Naive thymus-derived CD4-positive, alpha-beta T cell (primary cell): ENCODE measurements at regions of chr7 and their contacts with region 1.

Region 1: GRCh38 chr7:26151953-26152781 is at the start of gene NFE2L3:
- DNase-seq: peak; percentile 71 to 90 (median 79)
- ATAC-seq: peak; percentile 90
- H3K4me3 ChIP-seq: peak within 1 kb of the TSS; percentile 77
- H3K4me3 Mint-ChIP-seq: peak within 1 kb of the TSS; percentile 85 to 100 (median 92)
- H3K27ac ChIP-seq: peak within 1 kb of the TSS; percentile 73
- H3K27ac Mint-ChIP-seq: peak within 1 kb of the TSS; percentile 74 to 97 (median 93)
- H3K4me1 ChIP-seq: peaks cover 26 to 33% of the 10 kb centered on the region in 2 donors
- H3K4me1 Mint-ChIP-seq: peaks cover 23 to 56% (median 51%) of the 10 kb centered on the region in 7 donors
- H3K27me3 ChIP-seq: no peaks in the 10 kb centered on the region
- H3K27me3 Mint-ChIP-seq: no peaks in the 10 kb centered on the region
- total RNA-seq, gene NFE2L3: 1.1 to 49.5 (median 4.5) TPM

Region 2: DNA sequence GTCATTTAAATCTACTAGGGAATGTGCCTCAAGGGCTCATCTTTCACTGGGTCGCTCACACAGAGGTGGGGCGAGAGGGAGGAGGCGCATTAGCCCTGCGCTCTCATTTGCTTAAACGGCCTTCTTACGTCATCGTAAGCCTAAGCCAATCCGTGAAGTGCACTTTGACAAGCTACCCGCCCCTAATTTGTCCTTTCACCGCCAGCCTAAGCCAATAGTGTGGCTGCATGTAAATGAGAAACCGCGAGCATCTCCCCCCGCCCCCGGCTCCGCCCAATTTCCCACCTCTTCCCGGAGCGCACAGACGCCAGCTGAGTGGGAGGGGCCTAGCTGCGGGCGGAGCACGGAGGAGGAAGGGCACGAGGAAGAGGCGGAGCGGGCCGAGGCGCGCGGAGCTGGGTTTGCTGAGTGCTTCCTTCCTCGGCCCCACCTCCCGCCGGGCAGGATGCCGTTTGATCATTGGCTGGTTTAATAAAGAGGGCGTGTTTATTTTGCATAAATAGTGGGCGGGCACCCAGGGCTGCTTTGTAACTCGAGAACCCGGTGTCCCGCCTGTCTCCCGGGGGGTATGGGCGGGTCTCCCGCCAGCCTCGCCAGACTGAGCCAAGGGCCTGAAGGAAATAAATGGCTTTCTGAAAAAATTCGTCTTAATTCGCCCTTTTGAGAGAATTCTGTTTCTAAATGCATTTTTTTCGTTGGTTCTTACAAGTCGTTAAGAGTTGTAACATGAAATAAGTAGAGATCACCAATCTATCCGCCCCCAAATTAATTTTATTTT is 289.7 kb before region 1 on chr7:
- CTCF ChIA-PET with region 1: no interaction called
- POLR2A ChIA-PET with region 1: no interaction called
- intact Hi-C with region 1: loop called in 1 of 2 experiments (anchors 2 kb)
- DNase-seq: peak; percentile 32 to 95 (median 49)
- ATAC-seq: peak; percentile 93
- H3K4me3 ChIP-seq: peak overlapping the region; percentile 4
- H3K4me3 Mint-ChIP-seq: peak overlapping the region in 8 of 10 donors; percentile 38 to 87 (median 61)
- H3K27ac ChIP-seq: no peak overlapping the region
- H3K27ac Mint-ChIP-seq: peak overlapping the region in 8 of 9 donors; percentile 14 to 88 (median 84)
- H3K4me1 ChIP-seq: peaks cover 0 to 6% of the 10 kb centered on the region in 2 donors
- H3K4me1 Mint-ChIP-seq: peaks cover 8 to 46% (median 20%) of the 10 kb centered on the region in 7 donors
- H3K27me3 ChIP-seq: peaks cover 35 to 87% of the 10 kb centered on the region in 2 donors
- H3K27me3 Mint-ChIP-seq: peaks cover 23 to 82% (median 62%) of the 10 kb centered on the region in 5 donors

Region 3: DNA sequence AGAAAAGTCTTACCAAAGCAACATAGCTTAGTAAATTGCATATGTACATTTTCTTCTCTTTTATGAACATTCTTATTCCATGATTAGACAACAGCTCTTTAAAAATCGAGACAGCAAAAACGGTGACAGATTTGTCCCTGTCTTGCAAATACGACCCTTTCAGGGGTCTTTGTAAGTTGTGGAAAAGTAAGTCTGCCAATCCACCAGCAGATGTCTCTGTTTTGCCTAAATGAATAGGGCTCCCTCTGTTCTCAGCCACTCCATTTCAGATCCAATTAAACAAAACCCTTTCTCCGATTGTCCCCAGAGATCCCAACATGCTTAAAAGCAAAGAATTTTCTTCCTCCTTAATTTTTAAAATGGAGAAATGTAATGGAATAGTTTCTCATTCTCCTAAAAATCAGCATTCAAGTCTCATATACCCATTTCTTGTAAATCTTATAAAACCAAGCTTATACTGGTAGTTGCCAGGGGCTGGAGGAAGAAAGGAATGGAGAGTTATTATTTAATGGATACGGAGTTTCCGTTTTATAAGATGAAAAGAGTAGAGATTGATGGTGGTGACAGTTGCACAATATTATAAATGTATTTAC is 61.1 kb before region 1 on chr7:
- CTCF ChIA-PET with region 1: interaction called, 7 read pairs
- POLR2A ChIA-PET with region 1: interaction called, 9 read pairs
- intact Hi-C with region 1: loop called (anchors 1 kb)
- DNase-seq: peak in 7 of 9 donors; percentile 19 to 63 (median 53)
- ATAC-seq: peak; percentile 64
- H3K4me3 ChIP-seq: no peak overlapping the region
- H3K4me3 Mint-ChIP-seq: peak overlapping the region in 9 of 10 donors; percentile 4 to 50 (median 30)
- H3K27ac ChIP-seq: no peak overlapping the region
- H3K27ac Mint-ChIP-seq: peak overlapping the region in 6 of 9 donors; percentile 1 to 68 (median 2)
- H3K4me1 ChIP-seq: peaks cover 0 to 20% of the 10 kb centered on the region in 2 donors
- H3K4me1 Mint-ChIP-seq: peaks cover 11 to 54% (median 22%) of the 10 kb centered on the region in 7 donors
- H3K27me3 ChIP-seq: no peaks in the 10 kb centered on the region
- H3K27me3 Mint-ChIP-seq: no peaks in the 10 kb centered on the region

Region 4: GRCh38 chr7:26167301-26167934 is 15.3 kb after region 1 on chr7:
- CTCF ChIA-PET with region 1: interaction called, 3 read pairs
- POLR2A ChIA-PET with region 1: interaction called, 10 read pairs
- intact Hi-C with region 1: no loop called
- DNase-seq: no peak
- ATAC-seq: peak; percentile 84
- H3K4me3 ChIP-seq: no peak overlapping the region
- H3K4me3 Mint-ChIP-seq: peak overlapping the region in 1 of 10 donors; percentile 14
- H3K27ac ChIP-seq: no peak overlapping the region
- H3K27ac Mint-ChIP-seq: peak overlapping the region in 6 of 9 donors; percentile 1 to 73 (median 30)
- H3K4me1 ChIP-seq: peaks cover 0 to 15% of the 10 kb centered on the region in 2 donors
- H3K4me1 Mint-ChIP-seq: peaks cover 9 to 56% (median 13%) of the 10 kb centered on the region in 7 donors
- H3K27me3 ChIP-seq: no peaks in the 10 kb centered on the region
- H3K27me3 Mint-ChIP-seq: no peaks in the 10 kb centered on the region

Region 5: DNA sequence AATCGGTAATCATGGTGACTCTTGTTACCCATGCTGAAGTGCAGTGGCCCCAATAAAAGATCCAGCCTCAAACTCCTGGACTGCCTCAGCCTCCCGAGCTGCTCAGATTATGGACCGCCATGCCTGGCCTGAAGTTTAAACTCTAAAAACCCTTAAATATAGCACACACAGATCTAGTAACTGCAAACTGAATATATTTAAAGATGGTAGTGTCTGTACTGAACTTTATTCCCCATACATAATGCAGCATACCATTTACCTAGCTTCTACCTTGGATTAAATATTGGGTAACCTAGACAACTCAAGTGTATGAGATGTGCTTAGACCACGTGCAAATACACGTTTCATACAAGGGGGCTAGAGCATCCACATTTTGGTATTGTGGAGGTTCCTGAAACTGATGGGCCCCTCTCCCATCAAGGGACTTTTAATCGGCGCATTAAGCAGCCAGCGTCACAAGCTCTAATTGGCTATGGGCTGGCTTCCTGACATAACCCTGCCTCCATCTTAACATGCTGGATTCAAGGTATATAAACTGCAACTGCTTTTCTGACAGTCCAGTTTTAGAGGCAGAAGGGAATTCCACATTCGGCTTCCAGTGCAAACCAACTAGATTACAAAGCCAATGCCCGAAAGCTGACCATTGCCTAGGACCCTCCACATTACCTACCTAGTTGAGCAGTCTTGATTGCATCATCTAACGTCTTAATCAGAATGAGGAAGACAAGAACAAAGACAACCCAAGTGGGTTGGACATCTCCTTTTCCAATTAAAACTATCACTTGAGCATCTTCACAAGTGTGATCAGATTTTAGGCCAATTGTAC is 35.4 kb after region 1 on chr7:
- CTCF ChIA-PET with region 1: interaction called, 4 read pairs
- POLR2A ChIA-PET with region 1: interaction called, 8 read pairs
- intact Hi-C with region 1: loop called in 1 of 2 experiments (anchors 1 kb)
- DNase-seq: no peak
- ATAC-seq: peak; percentile 37
- H3K4me3 ChIP-seq: no peak overlapping the region
- H3K4me3 Mint-ChIP-seq: peak overlapping the region in 3 of 10 donors; percentile 16 to 49 (median 32)
- H3K27ac ChIP-seq: no peak overlapping the region
- H3K27ac Mint-ChIP-seq: peak overlapping the region in 7 of 9 donors; percentile 25 to 89 (median 71)
- H3K4me1 ChIP-seq: peaks cover 13 to 20% of the 10 kb centered on the region in 2 donors
- H3K4me1 Mint-ChIP-seq: peaks cover 47 to 90% (median 79%) of the 10 kb centered on the region in 7 donors
- H3K27me3 ChIP-seq: no peaks in the 10 kb centered on the region
- H3K27me3 Mint-ChIP-seq: no peaks in the 10 kb centered on the region

Region 6: GRCh38 chr7:26864309-26865093 is 712.3 kb after region 1 on chr7 and contains the start of gene SKAP2:
- CTCF ChIA-PET with region 1: no interaction called
- POLR2A ChIA-PET with region 1: no interaction called
- intact Hi-C with region 1: loop called in 1 of 2 experiments (anchors 10 kb)
- DNase-seq: peak; percentile 41 to 89 (median 63)
- ATAC-seq: peak; percentile 93
- H3K4me3 ChIP-seq: peak within 1 kb of the TSS; percentile 88
- H3K4me3 Mint-ChIP-seq: peak within 1 kb of the TSS; percentile 72 to 92 (median 88)
- H3K27ac ChIP-seq: peak within 1 kb of the TSS; percentile 23
- H3K27ac Mint-ChIP-seq: peak within 1 kb of the TSS; percentile 36 to 89 (median 74)
- H3K4me1 ChIP-seq: peaks cover 0 to 4% of the 10 kb centered on the region in 2 donors
- H3K4me1 Mint-ChIP-seq: peaks cover 5 to 24% (median 19%) of the 10 kb centered on the region in 7 donors
- H3K27me3 ChIP-seq: peaks cover 0 to 9% of the 10 kb centered on the region in 2 donors
- H3K27me3 Mint-ChIP-seq: peaks cover 46 to 68% (median 49%) of the 10 kb centered on the region in 5 donors
- total RNA-seq, gene SKAP2: 2.7 to 31.4 (median 5.1) TPM